Aorta (tissue), 5 donors: ENCODE measurements at regions of chr3 and their contacts with region 1.

Region 1: GRCh38 chr3:192444096-192444790 is 283.1 kb downstream of the FGF12 start:
- DNase-seq: peak; percentile 50 to 81
- ATAC-seq: peak; percentile 82
- H3K4me3 ChIP-seq: no peak overlapping the region
- H3K27ac ChIP-seq: no peak overlapping the region
- H3K4me1 ChIP-seq: peaks cover 0 to 2% of the 10 kb centered on the region in 2 donors
- H3K27me3 ChIP-seq: peaks cover 0 to 1% of the 10 kb centered on the region in 2 donors

Region 2: GRCh38 chr3:191414732-191415131 is 1029.5 kb before region 1 on chr3:
- intact Hi-C with region 1: loop called in 1 of 2 experiments (anchors 5 kb)
- DNase-seq: no peak
- ATAC-seq: no peak
- H3K4me3 ChIP-seq: no peak overlapping the region
- H3K27ac ChIP-seq: no peak overlapping the region
- H3K4me1 ChIP-seq: no peaks in the 10 kb centered on the region
- H3K27me3 ChIP-seq: no peaks in the 10 kb centered on the region

Region 3: GRCh38 chr3:191424881-191425280 is 1019.4 kb before region 1 on chr3:
- intact Hi-C with region 1: loop called in 1 of 2 experiments (anchors 5 kb)
- DNase-seq: no peak
- ATAC-seq: no peak
- H3K4me3 ChIP-seq: no peak overlapping the region
- H3K27ac ChIP-seq: no peak overlapping the region
- H3K4me1 ChIP-seq: no peaks in the 10 kb centered on the region
- H3K27me3 ChIP-seq: no peaks in the 10 kb centered on the region